Thyroid gland (tissue), 4 donors: ENCODE measurements at regions of chr6 and their contacts with region 1.

Region 1: DNA sequence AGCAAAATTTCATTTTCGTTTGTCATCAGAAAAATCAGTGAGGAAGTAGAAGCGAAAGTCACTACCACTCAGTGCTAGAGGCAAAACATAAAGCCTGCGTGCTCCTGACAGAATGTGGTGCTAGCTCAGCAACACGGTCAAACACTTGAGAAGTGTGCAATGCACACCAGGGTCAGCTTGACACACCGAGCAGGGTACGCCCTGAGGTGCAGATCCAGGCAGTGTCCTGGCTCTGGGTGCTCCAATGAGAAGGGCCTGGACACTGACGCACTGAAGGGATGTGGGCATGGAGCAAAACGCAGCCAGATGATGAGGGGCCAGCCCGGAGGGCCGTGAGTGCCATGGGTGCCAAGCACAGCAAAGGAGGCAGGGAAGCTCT is 5.9 kb downstream of the RNASET2 start:
- DNase-seq: no peak
- H3K4me3 ChIP-seq: no peak overlapping the region
- H3K27ac ChIP-seq: peak overlapping the region in 2 of 3 donors; percentile 66 to 74
- H3K4me1 ChIP-seq: peaks cover 2 to 15% of the 10 kb centered on the region in 2 donors
- H3K27me3 ChIP-seq: no peaks in the 10 kb centered on the region
- CTCF ChIP-seq: no peak
- POLR2A ChIP-seq: no peak

Region 2: GRCh38 chr6:166786704-166787293 is 163.6 kb before region 1 on chr6:
- intact Hi-C with region 1: loop called (anchors 5 kb)
- DNase-seq: peak; percentile 5 to 9
- H3K4me3 ChIP-seq: no peak overlapping the region
- H3K27ac ChIP-seq: no peak overlapping the region
- H3K4me1 ChIP-seq: no peaks in the 10 kb centered on the region
- H3K27me3 ChIP-seq: no peaks in the 10 kb centered on the region
- CTCF ChIP-seq: peak; percentile 52 to 80 (median 66)
- POLR2A ChIP-seq: no peak

Region 3: DNA sequence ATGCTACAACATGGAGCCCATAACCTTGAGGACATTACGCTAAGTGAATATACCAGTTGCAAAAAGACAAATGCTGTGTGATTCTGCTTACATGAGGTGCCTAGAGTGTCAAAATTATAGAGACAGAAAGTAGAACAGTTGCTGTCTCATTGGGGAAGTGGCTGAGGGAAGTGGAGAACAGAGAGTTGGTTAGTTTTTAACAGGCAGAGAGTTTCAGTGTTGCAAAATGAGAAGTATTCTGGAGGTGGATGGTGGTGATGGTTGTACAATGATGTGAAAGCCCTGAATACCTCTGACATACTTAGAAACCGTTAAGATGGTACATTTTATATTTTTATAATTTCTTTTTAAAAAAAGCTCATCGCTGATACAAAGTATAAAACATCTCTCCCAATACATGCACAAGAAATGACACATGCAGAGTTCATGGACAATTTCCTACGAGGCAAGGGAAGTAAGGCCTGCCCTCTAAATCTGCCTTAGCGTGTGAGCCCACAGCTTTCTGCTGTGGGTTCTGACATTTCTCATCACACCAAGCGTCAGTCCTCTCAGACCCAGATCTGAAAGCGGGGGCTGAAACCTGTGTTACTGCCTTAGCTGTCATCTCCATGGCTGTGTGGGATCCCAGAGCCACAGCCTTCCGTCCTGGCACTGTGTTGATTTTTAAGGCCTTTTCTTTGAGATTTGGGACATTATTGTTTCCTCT is 120.1 kb before region 1 on chr6:
- intact Hi-C with region 1: no loop called
- DNase-seq: no peak
- H3K4me3 ChIP-seq: no peak overlapping the region
- H3K27ac ChIP-seq: no peak overlapping the region
- H3K4me1 ChIP-seq: no peaks in the 10 kb centered on the region
- H3K27me3 ChIP-seq: no peaks in the 10 kb centered on the region
- CTCF ChIP-seq: no peak
- POLR2A ChIP-seq: no peak

Region 4: GRCh38 chr6:166989427-166990032 is 39.1 kb after region 1 on chr6:
- intact Hi-C with region 1: loop called (anchors 5 kb)
- DNase-seq: peak in 1 of 2 donors; percentile 48
- H3K4me3 ChIP-seq: no peak overlapping the region
- H3K27ac ChIP-seq: no peak overlapping the region
- H3K4me1 ChIP-seq: peaks cover 7 to 9% of the 10 kb centered on the region in 2 donors
- H3K27me3 ChIP-seq: no peaks in the 10 kb centered on the region
- CTCF ChIP-seq: peak in 4 of 6 experiments; percentile 30 to 77 (median 58)
- POLR2A ChIP-seq: no peak

Region 5: GRCh38 chr6:166999145-166999883 is 48.9 kb after region 1 on chr6 and contains the start of gene CEP43:
- intact Hi-C with region 1: loop called (anchors 5 kb)
- DNase-seq: peak; percentile 95 to 96
- H3K4me3 ChIP-seq: peak within 1 kb of the TSS; percentile 67 to 89 (median 88)
- H3K27ac ChIP-seq: peak within 1 kb of the TSS in 2 of 3 donors; percentile 60 to 67
- H3K4me1 ChIP-seq: peaks cover 12 to 13% of the 10 kb centered on the region in 2 donors
- H3K27me3 ChIP-seq: no peaks in the 10 kb centered on the region
- CTCF ChIP-seq: no peak
- POLR2A ChIP-seq: peak in 1 of 2 donors; percentile 91
- total RNA-seq, gene CEP43: 30.0 to 39.9 (median 33.8) TPM